ENCODE measurements at regions of chr16 and their contacts with region 1.

Region 1: GRCh38 chr16:21158208-21159110 is at the start of gene LDAF1:
- DNase-seq: peak; percentile 87 to 90
- H3K4me3 ChIP-seq: peak within 1 kb of the TSS; percentile 63 to 88 (median 84)
- H3K27ac ChIP-seq: peak within 1 kb of the TSS; percentile 79 to 90 (median 81)
- H3K4me1 ChIP-seq: peaks cover 32 to 42% of the 10 kb centered on the region in 2 donors
- H3K27me3 ChIP-seq: no peaks in the 10 kb centered on the region
- CTCF ChIP-seq: no peak
- POLR2A ChIP-seq: peak in 1 of 2 donors; percentile 82
- total RNA-seq, gene LDAF1: 23.0 to 84.0 (median 68.2) TPM

Region 2: DNA sequence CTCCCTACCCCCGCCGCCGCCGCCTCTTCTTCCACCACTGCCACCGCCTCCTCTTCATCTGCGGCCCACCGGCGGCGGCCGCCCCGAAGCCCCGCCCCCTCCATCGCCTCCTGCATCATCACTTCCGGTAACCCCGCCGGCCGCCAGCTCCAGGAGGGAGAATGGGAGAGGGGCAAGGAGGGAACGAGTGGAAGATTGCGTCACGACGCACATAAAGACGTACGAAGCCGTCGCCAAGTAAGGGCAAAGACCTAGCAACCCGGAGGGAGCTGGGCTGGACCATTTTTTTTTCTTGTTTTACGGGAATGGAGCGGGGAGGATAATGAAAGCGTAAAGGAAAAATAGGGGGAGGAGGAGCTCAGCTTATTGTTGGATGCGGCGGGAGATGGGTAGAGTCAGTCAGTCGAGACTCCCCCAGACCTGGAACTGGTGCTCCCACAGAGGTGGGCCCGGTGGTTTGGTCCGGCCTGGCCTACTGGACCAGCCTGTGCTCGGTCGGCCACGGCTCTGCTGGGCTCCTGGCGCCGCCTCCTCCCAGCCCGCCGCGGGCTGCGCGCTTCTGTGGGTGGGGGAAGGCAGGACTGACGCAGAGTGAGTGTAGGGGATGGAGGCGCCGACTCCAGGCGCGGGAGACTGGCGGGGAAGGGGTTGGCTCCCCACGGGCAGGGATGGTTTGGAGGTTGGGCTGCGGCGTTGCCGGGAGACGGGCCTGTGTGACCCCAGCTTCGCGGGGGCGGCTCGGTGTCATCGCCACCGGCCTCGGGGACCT is 258.0 kb before region 1 on chr16 and contains the starts of genes DCUN1D3 and LYRM1:
- intact Hi-C with region 1: no loop called
- DNase-seq: peak; percentile 97 to 98
- H3K4me3 ChIP-seq: peak within 1 kb of the TSS; percentile 60 to 89 (median 63)
- H3K27ac ChIP-seq: peak within 1 kb of the TSS; percentile 92 to 97 (median 95)
- H3K4me1 ChIP-seq: peaks cover 15 to 50% of the 10 kb centered on the region in 2 donors
- H3K27me3 ChIP-seq: no peaks in the 10 kb centered on the region
- CTCF ChIP-seq: no peak
- POLR2A ChIP-seq: peak; percentile 68 to 90
- total RNA-seq, gene DCUN1D3: 10.3 to 13.7 (median 11.8) TPM
- total RNA-seq, gene LYRM1: 32.8 to 43.7 (median 41.0) TPM

Region 3: GRCh38 chr16:21300309-21301167 is 142.1 kb after region 1 on chr16:
- intact Hi-C with region 1: loop called (anchors 5 kb)
- DNase-seq: peak; percentile 97 to 98
- H3K4me3 ChIP-seq: peak overlapping the region; percentile 30 to 71 (median 59)
- H3K27ac ChIP-seq: peak overlapping the region; percentile 12 to 83 (median 77)
- H3K4me1 ChIP-seq: peaks cover 0 to 5% of the 10 kb centered on the region in 2 donors
- H3K27me3 ChIP-seq: no peaks in the 10 kb centered on the region
- CTCF ChIP-seq: peak; percentile 36 to 96 (median 84)
- POLR2A ChIP-seq: peak in 1 of 2 donors; percentile 63

Region 4: GRCh38 chr16:21523411-21524067 is 365.1 kb after region 1 on chr16:
- intact Hi-C with region 1: loop called (anchors 10 kb)
- DNase-seq: no peak
- H3K4me3 ChIP-seq: no peak overlapping the region
- H3K27ac ChIP-seq: no peak overlapping the region
- H3K4me1 ChIP-seq: peaks cover 0 to 4% of the 10 kb centered on the region in 2 donors
- H3K27me3 ChIP-seq: no peaks in the 10 kb centered on the region
- CTCF ChIP-seq: no peak
- POLR2A ChIP-seq: no peak